ENCODE measurements at regions of chr1 and their contacts with region 1.

Region 1: DNA sequence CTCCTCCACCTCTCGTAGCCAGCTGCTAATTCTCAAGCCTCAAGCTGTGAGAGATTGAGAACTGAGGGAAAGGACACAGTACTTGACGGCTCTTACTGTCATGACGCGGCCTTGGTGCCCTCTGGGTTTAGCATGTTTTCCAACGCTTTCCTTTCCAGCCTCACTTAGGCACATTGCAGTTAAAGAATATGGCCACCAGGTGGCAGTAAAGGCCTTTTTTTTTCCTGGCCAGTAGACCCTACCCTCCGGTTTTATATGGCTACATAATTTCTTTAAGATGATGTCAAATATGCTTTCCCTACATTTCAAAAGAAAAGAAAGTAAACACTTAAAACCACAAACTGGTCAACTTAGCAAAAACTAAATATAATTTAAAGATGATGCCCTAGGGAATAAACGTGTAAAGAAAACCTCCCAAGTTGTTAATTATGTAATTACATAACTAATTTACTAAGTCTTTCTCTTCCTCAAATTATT is 56.8 kb upstream of the PRDX6 start:
- DNase-seq: peak; percentile 67 to 90 (median 78)
- ATAC-seq: peak; percentile 85
- H3K4me3 ChIP-seq: no peak overlapping the region
- H3K27ac ChIP-seq: peak overlapping the region; percentile 4; the same call in 1 of the 3 replicates
- H3K4me1 ChIP-seq: peaks cover 4 to 40% of the 10 kb centered on the region in 2 experiments; a peak in 4 of 5 replicates
- H3K27me3 ChIP-seq: no peaks in the 10 kb centered on the region
- CTCF ChIP-seq: peak; percentile 77 to 96 (median 86)
- EP300 ChIP-seq: no peak; the same call in 1 of the 2 replicates
- POLR2A ChIP-seq: no peak
- RAD21 ChIP-seq: peak; percentile 98

Region 2: DNA sequence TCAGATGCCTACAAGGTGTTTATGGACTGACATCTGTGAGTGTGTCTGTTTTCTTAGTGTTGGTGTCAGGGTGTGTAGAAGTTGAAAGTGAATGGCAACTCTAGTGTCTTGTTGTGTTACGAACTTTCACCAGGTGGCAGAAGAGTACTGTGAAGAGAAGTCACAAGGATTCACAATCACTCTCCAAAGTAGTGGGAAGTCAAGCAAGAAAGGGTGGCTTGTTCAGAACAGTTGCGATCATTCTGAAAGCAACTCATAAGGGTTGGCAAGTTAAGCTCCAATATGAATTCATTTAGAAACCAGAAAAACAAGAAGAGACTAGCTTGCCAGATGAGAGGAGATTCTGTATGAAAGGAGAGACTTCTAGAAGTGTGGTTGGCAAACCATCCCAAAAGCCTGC is 675.4 kb before region 1 on chr1:
- CTCF ChIA-PET with region 1: no interaction called
- POLR2A ChIA-PET with region 1: no interaction called
- in situ Hi-C with region 1: loop called (anchors 10 kb)
- intact Hi-C with region 1: loop called (anchors 1 kb)
- DNase-seq: peak; percentile 28 to 71 (median 39)
- ATAC-seq: peak; percentile 90
- H3K4me3 ChIP-seq: no peak overlapping the region
- H3K27ac ChIP-seq: no peak overlapping the region
- H3K4me1 ChIP-seq: peaks cover 3 to 7% of the 10 kb centered on the region in 2 experiments; a peak in 3 of 5 replicates
- H3K27me3 ChIP-seq: no peaks in the 10 kb centered on the region; a peak in 1 of 5 replicates
- CTCF ChIP-seq: peak; percentile 69 to 88 (median 70)
- EP300 ChIP-seq: no peak
- POLR2A ChIP-seq: no peak
- RAD21 ChIP-seq: peak; percentile 99

Region 3: DNA sequence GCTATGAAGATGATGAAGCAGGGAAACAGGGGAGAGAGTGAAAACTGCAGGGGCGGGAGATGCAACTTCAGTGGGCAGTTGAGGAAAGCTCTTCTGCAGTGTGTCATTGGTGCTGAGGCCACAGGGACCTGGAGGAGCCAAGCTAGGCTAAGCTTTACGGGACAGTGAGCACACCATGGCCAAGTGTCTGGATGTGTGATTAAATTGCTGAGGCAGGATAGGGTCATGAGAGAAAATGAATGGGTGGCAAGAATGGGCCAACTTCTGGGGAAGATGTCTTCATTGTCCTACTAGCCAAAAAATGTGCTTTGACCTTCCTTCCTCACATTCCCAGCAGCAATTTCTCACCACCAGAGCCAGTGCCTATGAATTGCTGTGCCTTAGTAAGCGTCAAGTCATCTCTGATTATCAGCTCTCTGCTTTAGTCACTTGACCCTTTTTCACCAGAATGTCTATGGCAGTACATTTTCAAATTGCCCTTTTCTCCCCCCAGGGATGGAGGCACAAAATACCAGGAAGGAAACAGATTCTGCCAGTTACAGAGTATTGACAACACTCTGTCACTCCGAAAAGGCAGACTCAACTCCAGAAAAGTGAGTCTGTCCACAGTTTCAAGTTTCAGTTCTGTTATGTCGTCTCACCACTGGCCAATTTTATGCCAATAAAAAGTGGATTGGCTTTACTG is 537.1 kb before region 1 on chr1:
- CTCF ChIA-PET with region 1: no interaction called
- POLR2A ChIA-PET with region 1: no interaction called
- in situ Hi-C with region 1: no loop called
- intact Hi-C with region 1: no loop called
- DNase-seq: no peak
- ATAC-seq: no peak
- H3K4me3 ChIP-seq: no peak overlapping the region
- H3K27ac ChIP-seq: no peak overlapping the region
- H3K4me1 ChIP-seq: no peaks in the 10 kb centered on the region; a peak in 1 of 5 replicates
- H3K27me3 ChIP-seq: no peaks in the 10 kb centered on the region
- CTCF ChIP-seq: no peak
- EP300 ChIP-seq: no peak
- POLR2A ChIP-seq: no peak
- RAD21 ChIP-seq: no peak

Region 4: DNA sequence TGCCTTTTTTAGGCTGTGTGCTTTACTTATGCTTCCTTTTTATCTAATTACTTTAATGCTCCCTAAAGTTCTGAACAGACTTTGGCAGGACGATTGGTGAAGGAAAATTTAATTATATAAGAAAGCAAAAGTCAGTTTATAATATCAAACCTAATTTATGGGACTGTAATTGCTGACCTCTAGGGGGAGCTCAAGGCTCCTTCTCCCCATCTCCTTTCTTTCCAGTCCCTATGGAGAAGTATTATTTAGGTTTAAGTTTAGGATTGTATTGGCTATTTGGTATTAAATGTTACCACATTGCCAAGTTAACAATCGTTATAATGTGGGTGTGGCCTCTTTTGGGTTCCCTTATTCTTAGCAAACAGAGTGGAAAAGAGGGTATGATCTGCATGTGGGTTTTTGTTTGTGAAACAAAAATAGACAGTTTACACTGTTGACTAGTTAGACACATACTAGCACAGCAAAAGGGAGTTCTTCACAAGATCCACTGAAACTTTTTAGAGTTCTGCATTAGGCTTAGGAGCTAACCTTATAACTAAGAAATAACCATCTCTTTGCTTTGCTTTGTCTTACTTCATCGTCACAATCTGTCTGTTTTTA is 165.1 kb before region 1 on chr1:
- CTCF ChIA-PET with region 1: interaction called, 3 read pairs
- POLR2A ChIA-PET with region 1: no interaction called
- in situ Hi-C with region 1: no loop called
- intact Hi-C with region 1: loop called (anchors 2 kb)
- DNase-seq: peak; percentile 60 to 77 (median 66)
- ATAC-seq: peak; percentile 87
- H3K4me3 ChIP-seq: no peak overlapping the region
- H3K27ac ChIP-seq: no peak overlapping the region
- H3K4me1 ChIP-seq: peaks cover 0 to 7% of the 10 kb centered on the region in 2 experiments; a peak in 1 of 5 replicates
- H3K27me3 ChIP-seq: no peaks in the 10 kb centered on the region
- CTCF ChIP-seq: peak; percentile 51 to 92 (median 77); a peak in 5 of 6 replicates
- EP300 ChIP-seq: no peak; the same call in 1 of the 2 replicates
- POLR2A ChIP-seq: no peak
- RAD21 ChIP-seq: peak; percentile 72 to 89

Region 5: DNA sequence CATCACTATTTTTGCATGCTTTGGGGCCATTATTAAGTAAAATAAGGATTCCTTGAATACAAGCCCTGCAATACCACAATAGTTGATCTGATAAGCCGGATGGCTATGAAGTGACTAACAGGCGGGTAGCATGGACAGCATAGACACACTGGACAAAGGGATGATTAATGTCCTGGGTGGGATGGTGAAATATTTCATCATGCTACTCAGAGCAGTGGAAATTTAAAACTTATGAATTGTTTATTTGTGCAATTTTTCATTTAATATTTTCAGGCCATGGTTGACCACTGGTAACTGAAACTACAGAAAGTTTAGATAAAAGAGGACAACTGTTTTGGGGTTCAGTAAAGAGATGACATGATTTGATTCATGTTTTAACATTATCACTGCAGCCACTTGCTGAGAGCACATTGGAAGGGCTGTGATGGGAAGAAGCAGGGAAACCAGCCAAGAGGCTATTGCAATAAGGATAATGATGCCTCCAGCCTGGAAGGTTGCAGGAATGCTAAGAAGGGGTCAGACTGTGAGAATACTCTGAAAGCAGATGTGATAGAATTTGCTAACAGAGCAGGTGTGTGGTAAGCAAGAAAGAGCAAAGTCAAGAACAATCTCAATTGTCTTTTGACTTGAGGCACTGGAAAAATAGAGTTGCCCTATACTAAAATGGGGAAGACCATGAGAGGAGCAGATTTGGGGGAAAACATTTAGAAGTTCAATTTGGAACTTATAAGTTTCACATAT is 150.7 kb before region 1 on chr1:
- CTCF ChIA-PET with region 1: no interaction called
- POLR2A ChIA-PET with region 1: no interaction called
- in situ Hi-C with region 1: no loop called
- intact Hi-C with region 1: loop called (anchors 5 kb)
- DNase-seq: peak in 2 of 4 experiments; percentile 63 to 69
- ATAC-seq: peak; percentile 97
- H3K4me3 ChIP-seq: no peak overlapping the region
- H3K27ac ChIP-seq: peak overlapping the region; percentile 52; the same call in 2 of the 3 replicates
- H3K4me1 ChIP-seq: peaks cover 0 to 29% of the 10 kb centered on the region in 2 experiments; a peak in 3 of 5 replicates
- H3K27me3 ChIP-seq: no peaks in the 10 kb centered on the region
- CTCF ChIP-seq: no peak
- EP300 ChIP-seq: peak; percentile 90
- POLR2A ChIP-seq: no peak
- RAD21 ChIP-seq: peak; percentile 25 to 41

Region 6: GRCh38 chr1:173779936-173780335 is 359.6 kb after region 1 on chr1:
- CTCF ChIA-PET with region 1: no interaction called
- POLR2A ChIA-PET with region 1: no interaction called
- in situ Hi-C with region 1: no loop called
- intact Hi-C with region 1: loop called (anchors 5 kb)
- DNase-seq: no peak
- ATAC-seq: no peak
- H3K4me3 ChIP-seq: no peak overlapping the region
- H3K27ac ChIP-seq: no peak overlapping the region
- H3K4me1 ChIP-seq: no peaks in the 10 kb centered on the region
- H3K27me3 ChIP-seq: no peaks in the 10 kb centered on the region
- CTCF ChIP-seq: no peak
- EP300 ChIP-seq: no peak
- POLR2A ChIP-seq: no peak
- RAD21 ChIP-seq: no peak

Region 7: DNA sequence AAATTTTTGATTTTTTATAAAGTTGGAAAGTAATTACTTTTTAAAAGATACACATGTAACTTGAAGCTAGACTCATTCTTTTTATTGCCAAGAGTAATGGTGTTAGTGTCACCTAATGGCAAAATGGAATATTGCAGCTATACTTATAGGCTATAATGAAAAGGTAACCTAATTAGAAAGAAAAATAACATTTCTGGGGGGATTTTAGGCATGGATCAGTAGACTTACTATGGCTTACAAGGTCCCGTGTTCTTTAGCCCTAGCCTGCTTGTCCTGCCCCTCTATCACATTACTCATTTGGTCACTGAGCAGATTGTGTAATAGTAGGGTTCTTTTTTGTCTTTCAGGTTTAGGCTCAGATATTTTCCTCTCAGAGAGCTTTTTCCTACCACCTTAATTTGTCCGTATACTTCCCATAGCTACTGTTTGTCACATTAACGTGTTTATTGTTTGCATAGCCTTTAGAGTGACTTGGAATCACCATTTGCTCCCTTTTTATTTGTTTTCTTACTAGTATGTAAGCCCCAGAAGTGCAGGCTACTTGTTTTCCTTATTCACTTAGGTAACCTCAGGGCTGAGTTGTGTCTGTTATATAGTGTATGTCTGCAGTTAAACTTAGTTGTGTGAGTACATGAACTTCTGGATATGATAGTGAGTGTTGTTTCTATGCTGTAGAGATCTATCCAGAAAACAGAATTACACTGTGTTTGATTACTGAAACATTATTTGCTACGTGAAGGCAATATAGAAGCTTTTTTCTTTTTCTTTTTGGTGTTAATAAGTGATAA is 797.6 kb after region 1 on chr1:
- CTCF ChIA-PET with region 1: no interaction called
- POLR2A ChIA-PET with region 1: no interaction called
- in situ Hi-C with region 1: no loop called
- intact Hi-C with region 1: loop called (anchors 5 kb)
- DNase-seq: peak in 2 of 4 experiments; percentile 31 to 59
- ATAC-seq: peak; percentile 90
- H3K4me3 ChIP-seq: no peak overlapping the region
- H3K27ac ChIP-seq: no peak overlapping the region
- H3K4me1 ChIP-seq: peaks cover 0 to 3% of the 10 kb centered on the region in 2 experiments; a peak in 2 of 5 replicates
- H3K27me3 ChIP-seq: no peaks in the 10 kb centered on the region
- CTCF ChIP-seq: peak; percentile 58 to 95 (median 70)
- EP300 ChIP-seq: no peak
- POLR2A ChIP-seq: no peak
- RAD21 ChIP-seq: peak; percentile 89 to 93

Region 8: GRCh38 chr1:174743654-174744561 is 1323.5 kb after region 1 on chr1:
- CTCF ChIA-PET with region 1: interaction called, 3 read pairs
- POLR2A ChIA-PET with region 1: no interaction called
- in situ Hi-C with region 1: loop called (anchors 10 kb)
- intact Hi-C with region 1: loop called (anchors 5 kb)
- DNase-seq: peak; percentile 32 to 55 (median 44)
- ATAC-seq: peak; percentile 40
- H3K4me3 ChIP-seq: no peak overlapping the region
- H3K27ac ChIP-seq: no peak overlapping the region
- H3K4me1 ChIP-seq: peaks cover 4 to 15% of the 10 kb centered on the region in 2 experiments
- H3K27me3 ChIP-seq: no peaks in the 10 kb centered on the region
- CTCF ChIP-seq: peak; percentile 46 to 85 (median 51); a peak in 5 of 6 replicates
- EP300 ChIP-seq: no peak
- POLR2A ChIP-seq: no peak
- RAD21 ChIP-seq: peak; percentile 55 to 64